Right cardiac atrium (tissue), 5 donors: ENCODE measurements at regions of chr10 and their contacts with region 1.

Region 1: DNA sequence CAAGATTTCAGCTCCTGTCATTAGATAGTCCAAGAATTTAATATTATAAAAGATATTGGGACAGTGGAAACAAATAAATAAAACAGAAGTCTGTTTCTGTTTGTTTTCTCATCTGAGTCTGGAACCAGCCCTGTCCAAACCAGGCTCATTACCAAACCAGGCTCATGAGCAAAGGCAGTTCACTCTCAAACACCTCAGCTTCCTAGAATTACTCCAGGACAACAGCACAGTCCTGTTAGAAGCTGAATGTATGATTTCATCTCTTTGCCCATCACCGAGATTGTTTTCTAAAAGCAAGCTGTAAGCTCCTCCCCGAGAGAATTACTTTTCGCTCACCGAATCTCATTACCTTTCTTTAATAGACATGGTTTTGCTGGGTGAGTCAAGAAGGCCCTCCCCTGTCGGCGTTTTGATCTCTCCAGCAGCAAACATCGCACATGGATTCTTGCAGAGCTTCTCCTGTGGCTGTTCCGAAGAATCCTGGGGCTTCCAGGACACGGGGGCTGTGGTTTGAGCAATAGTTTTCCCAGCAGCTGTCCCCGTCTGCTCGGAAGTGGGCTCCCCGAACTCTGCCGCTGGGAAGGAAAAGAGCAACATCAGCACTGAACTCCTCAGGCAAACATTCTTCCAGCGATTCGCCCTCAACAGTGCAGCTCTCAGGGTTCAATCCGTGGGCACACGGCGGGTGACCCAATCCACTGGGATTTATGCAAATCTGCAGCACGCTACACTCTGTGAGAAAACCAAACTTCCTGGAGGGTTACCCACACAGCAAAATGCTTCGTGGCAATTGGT is 112.5 kb downstream of the SVIL start:
- DNase-seq: peak in 1 of 3 donors; percentile 14
- ATAC-seq: peak in 1 of 2 donors; percentile 42
- H3K4me3 ChIP-seq: peak overlapping the region; percentile 18
- H3K27ac ChIP-seq: no peak overlapping the region
- H3K4me1 ChIP-seq: peaks cover 3% of the 10 kb centered on the region
- H3K27me3 ChIP-seq: no peaks in the 10 kb centered on the region

Region 2: GRCh38 chr10:29585488-29585980 is 63.3 kb after region 1 on chr10:
- intact Hi-C with region 1: loop called in 1 of 4 experiments (anchors 10 kb)
- DNase-seq: peak; percentile 42 to 70 (median 62)
- ATAC-seq: peak; percentile 29 to 30
- H3K4me3 ChIP-seq: no peak overlapping the region
- H3K27ac ChIP-seq: peak overlapping the region; percentile 85
- H3K4me1 ChIP-seq: peaks cover 5% of the 10 kb centered on the region
- H3K27me3 ChIP-seq: no peaks in the 10 kb centered on the region